Posterior cingulate gyrus (tissue), 11 donors: ENCODE measurements at regions of chr19 and their contacts with region 1.

Region 1: GRCh38 chr19:54390942-54391577 is 24.2 kb upstream of the TTYH1 start:
- DNase-seq: peak in 6 of 10 donors; percentile 24 to 78 (median 42)

Region 2: GRCh38 chr19:54325194-54325621 is 65.9 kb before region 1 on chr19:
- intact Hi-C with region 1: loop called (anchors 2 kb)
- DNase-seq: peak in 2 of 10 donors; percentile 12 to 29